H1 (cell line): ENCODE measurements at regions of chr11 and their contacts with region 1.

Region 1: GRCh38 chr11:120952461-120953434 is 71.2 kb upstream of the TBCEL start:
- DNase-seq: peak; percentile 60 to 97
- H3K4me3 ChIP-seq: peak overlapping the region in 1 of 4 experiments; percentile 18; a peak in 1 of 8 replicates
- H3K27ac ChIP-seq: no peak overlapping the region
- H3K4me1 ChIP-seq: peaks cover 11 to 24% (median 15%) of the 10 kb centered on the region in 4 experiments
- H3K27me3 ChIP-seq: no peaks in the 10 kb centered on the region; a peak in 1 of 7 replicates
- CTCF ChIP-seq: peak; percentile 84 to 94 (median 93)
- EP300 ChIP-seq: 0 out of 3 replicates have a peak, but pooled peaks of 1 of the 2 experiments have one; percentile 27
- POLR2A ChIP-seq: no peak
- RAD21 ChIP-seq: peak; percentile 94 to 98

Region 2: GRCh38 chr11:120917559-120918239 is 35.0 kb before region 1 on chr11:
- CTCF ChIA-PET with region 1: interaction called, 12 read pairs
- POLR2A ChIA-PET with region 1: no interaction called
- DNase-seq: no peak
- H3K4me3 ChIP-seq: no peak overlapping the region
- H3K27ac ChIP-seq: no peak overlapping the region
- H3K4me1 ChIP-seq: no peaks in the 10 kb centered on the region
- H3K27me3 ChIP-seq: no peaks in the 10 kb centered on the region; a peak in 1 of 7 replicates
- CTCF ChIP-seq: no peak
- EP300 ChIP-seq: no peak
- POLR2A ChIP-seq: no peak
- RAD21 ChIP-seq: no peak

Region 3: GRCh38 chr11:120929664-120930154 is 23.0 kb before region 1 on chr11:
- CTCF ChIA-PET with region 1: interaction called, 218 read pairs
- POLR2A ChIA-PET with region 1: interaction called, 4 read pairs
- DNase-seq: peak; percentile 73 to 88
- H3K4me3 ChIP-seq: no peak overlapping the region
- H3K27ac ChIP-seq: no peak overlapping the region
- H3K4me1 ChIP-seq: peaks cover 0 to 8% (median 0%) of the 10 kb centered on the region in 4 experiments; a peak in 3 of 7 replicates
- H3K27me3 ChIP-seq: peaks cover 0 to 3% (median 0%) of the 10 kb centered on the region in 4 experiments; a peak in 1 of 7 replicates
- CTCF ChIP-seq: peak; percentile 92 to 93 (median 93)
- EP300 ChIP-seq: no peak
- POLR2A ChIP-seq: no peak
- RAD21 ChIP-seq: peak; percentile 86 to 90

Region 4: DNA sequence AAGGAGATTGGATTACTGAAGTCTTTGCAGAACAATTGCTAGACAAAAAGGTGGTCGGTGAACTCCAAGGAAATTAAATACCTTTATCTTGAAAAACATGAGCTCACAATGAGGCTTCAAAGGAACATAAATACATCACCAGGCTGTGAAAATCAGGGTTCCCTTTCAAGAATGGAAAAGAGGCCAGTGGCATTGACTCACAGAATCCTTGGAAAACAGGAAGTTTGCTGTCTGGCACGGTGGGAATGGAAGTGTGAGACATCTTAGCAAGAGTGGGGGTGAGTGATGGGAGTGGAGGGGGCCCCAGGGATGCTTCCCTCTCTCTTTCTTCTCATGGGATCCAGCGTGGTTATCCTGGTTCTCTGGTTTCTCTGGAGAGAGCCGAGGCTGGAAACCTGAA is 22.2 kb after region 1 on chr11:
- CTCF ChIA-PET with region 1: interaction called, 10 read pairs
- POLR2A ChIA-PET with region 1: no interaction called
- DNase-seq: no peak
- H3K4me3 ChIP-seq: no peak overlapping the region
- H3K27ac ChIP-seq: no peak overlapping the region
- H3K4me1 ChIP-seq: no peaks in the 10 kb centered on the region
- H3K27me3 ChIP-seq: no peaks in the 10 kb centered on the region
- CTCF ChIP-seq: no peak
- EP300 ChIP-seq: no peak
- POLR2A ChIP-seq: no peak
- RAD21 ChIP-seq: no peak

Region 5: DNA sequence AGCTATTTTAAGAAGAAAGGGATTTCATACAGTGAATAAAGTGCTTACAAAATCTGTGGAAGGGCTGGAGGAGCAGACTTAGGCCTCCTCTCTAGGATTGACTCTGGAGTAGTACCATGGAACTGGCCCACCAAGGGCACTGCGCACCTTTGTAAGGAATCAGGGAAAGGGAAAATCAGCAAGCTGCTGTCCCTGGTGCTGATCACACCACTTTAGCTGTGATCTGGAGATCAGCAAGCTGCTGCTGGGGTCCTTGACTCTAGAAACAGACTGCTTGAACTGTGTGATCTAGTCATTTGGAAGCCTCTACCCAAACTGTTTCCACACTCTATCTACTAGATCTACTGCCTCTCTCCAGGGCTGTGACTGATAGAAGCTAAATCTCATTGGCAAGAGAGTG is 129.9 kb after region 1 on chr11:
- CTCF ChIA-PET with region 1: no interaction called
- POLR2A ChIA-PET with region 1: no interaction called
- DNase-seq: peak; percentile 19 to 75
- H3K4me3 ChIP-seq: no peak overlapping the region
- H3K27ac ChIP-seq: no peak overlapping the region
- H3K4me1 ChIP-seq: no peaks in the 10 kb centered on the region
- H3K27me3 ChIP-seq: no peaks in the 10 kb centered on the region; a peak in 1 of 7 replicates
- CTCF ChIP-seq: no peak
- EP300 ChIP-seq: no peak
- POLR2A ChIP-seq: no peak
- RAD21 ChIP-seq: peak; percentile 14 to 20; a peak in 2 of 4 replicates